ENCODE measurements at regions of chr6 and their contacts with region 1.

Region 1: DNA sequence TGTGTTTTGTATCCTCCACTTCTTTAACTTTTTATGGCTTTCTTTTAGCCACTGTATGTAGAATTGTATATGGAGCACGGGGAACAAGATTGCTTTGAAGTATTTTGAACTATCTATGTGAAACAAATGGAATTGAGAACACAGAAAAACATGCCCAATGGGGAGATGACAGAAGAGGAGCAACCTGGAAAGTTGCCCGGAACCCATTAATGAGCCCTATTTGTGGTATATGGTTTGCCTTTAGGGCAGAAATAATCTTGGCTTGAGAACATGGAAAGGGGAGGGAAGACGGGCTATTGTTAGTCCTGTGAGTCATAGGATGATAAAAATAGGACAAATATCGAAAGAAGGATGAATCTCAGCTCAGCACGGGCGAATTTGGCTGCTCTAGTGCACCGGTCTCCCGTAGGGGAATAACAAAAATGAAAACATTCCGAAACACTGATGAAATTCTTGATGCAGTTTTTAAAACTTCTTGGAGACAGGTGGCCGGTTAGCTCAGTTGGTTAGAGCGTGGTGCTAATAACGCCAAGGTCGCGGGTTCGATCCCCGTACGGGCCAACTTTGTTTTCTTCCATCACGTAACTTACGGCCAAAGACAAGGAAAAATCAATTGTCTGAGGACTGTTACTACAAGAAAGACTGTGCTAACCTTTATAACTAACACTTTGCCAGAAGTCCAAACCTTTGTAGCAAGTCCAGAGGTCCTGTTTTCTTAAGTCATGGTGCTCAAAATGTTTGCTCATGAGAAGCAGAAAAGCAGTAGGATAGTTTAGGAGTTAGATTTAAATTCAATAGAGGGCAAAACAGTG is 15.7 kb downstream of the HMGN4 start:
- DNase-seq: peak; percentile 89
- H3K4me3 Mint-ChIP-seq: no peak overlapping the region
- H3K27ac Mint-ChIP-seq: no peak overlapping the region
- H3K4me1 Mint-ChIP-seq: peaks cover 23% of the 10 kb centered on the region
- H3K27me3 Mint-ChIP-seq: no peaks in the 10 kb centered on the region

Region 2: DNA sequence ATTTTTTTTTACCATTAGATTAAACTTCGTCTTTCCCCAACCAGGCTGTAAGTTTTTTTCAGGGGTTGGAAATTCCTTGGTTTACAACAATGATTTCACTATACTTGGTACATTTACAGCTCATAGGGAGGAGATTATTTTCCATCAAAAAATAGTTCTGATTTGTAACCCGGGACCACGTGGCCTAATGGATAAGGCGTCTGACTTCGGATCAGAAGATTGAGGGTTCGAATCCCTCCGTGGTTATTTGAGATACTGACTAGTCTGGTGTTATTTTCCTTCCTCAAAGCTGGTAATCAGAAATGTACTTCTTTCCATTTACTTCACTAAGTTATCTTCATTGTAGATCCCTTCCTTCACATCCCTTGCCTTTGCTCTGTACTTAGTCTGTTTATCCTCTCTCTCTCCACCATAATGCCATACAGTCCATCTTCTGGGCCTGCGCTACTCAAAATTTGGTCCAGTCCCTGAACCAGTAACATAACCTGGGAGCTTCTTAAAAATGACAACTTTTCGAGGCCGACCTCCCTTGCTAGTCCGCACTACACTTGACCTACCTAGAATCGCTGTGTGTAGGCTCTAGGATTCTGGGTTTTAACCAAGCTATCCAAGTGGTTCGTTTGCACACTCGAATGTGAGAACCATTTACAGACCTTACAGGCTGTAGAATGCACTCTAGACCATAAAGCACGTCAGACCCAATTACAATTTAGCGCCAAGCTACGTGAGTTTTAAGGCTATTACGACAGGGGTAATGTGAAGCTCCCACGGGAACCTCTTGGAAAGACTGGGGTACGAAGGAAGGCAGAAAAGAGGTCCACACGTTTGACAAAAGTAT is 231.0 kb before region 1 on chr6:
- CTCF ChIA-PET with region 1: interaction called, 3 read pairs
- POLR2A ChIA-PET with region 1: no interaction called
- intact Hi-C with region 1: loop called (anchors 5 kb)
- DNase-seq: peak; percentile 64
- H3K4me3 Mint-ChIP-seq: peak overlapping the region; percentile 82
- H3K27ac Mint-ChIP-seq: peak overlapping the region; percentile 80
- H3K4me1 Mint-ChIP-seq: peaks cover 21% of the 10 kb centered on the region
- H3K27me3 Mint-ChIP-seq: peaks cover 25% of the 10 kb centered on the region

Region 3: GRCh38 chr6:26520853-26521599 is 32.8 kb before region 1 on chr6:
- CTCF ChIA-PET with region 1: no interaction called
- POLR2A ChIA-PET with region 1: no interaction called
- intact Hi-C with region 1: loop called (anchors 1 kb)
- DNase-seq: peak; percentile 89
- H3K4me3 Mint-ChIP-seq: peak overlapping the region; percentile 72
- H3K27ac Mint-ChIP-seq: peak overlapping the region; percentile 81
- H3K4me1 Mint-ChIP-seq: peaks cover 30% of the 10 kb centered on the region
- H3K27me3 Mint-ChIP-seq: peaks cover 1% of the 10 kb centered on the region

Region 4: GRCh38 chr6:26537846-26538571 is 15.8 kb before region 1 on chr6 and contains the start of gene HMGN4:
- CTCF ChIA-PET with region 1: interaction called, 16 read pairs
- POLR2A ChIA-PET with region 1: interaction called, 8 read pairs
- intact Hi-C with region 1: loop called (anchors 1 kb)
- DNase-seq: peak; percentile 88
- H3K4me3 Mint-ChIP-seq: peak within 1 kb of the TSS; percentile 84
- H3K27ac Mint-ChIP-seq: peak within 1 kb of the TSS; percentile 97
- H3K4me1 Mint-ChIP-seq: peaks cover 64% of the 10 kb centered on the region
- H3K27me3 Mint-ChIP-seq: peaks cover 2% of the 10 kb centered on the region
- total RNA-seq, gene HMGN4: 93.2 to 96.0 TPM

Region 5: DNA sequence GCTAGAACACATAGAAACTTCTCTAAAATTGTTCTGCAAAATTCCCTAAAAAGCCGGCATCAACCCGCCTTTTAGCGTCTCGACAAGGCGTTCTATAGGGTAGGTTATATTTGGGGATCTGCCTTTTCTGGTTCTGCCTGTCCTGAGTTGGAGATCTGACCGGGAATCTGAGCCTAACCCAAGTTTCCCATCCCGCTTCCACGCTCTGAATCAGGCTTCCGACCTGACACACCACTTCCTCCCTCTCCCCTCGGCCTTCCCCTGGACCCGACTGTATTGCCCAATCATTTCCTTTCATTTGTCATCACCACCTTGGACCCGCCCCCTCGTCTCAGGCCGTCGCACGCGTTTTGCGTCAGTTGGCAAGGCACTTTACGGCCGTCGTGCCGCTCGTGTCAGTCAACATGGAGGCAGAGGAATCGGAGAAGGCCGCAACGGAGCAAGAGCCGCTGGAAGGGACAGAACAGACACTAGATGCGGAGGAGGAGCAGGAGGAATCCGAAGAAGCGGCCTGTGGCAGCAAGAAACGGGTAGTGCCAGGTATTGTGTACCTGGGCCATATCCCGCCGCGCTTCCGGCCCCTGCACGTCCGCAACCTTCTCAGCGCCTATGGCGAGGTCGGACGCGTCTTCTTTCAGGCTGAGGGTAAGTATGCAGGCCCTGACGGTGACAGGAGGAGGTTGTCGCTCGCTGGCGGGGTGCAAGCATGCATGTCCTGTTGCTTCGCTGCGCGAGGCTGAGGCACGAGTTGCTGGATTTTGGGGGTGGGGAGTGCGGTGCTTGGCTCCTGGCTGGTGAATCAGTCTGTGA is 42.9 kb after region 1 on chr6 and contains the start of gene ABT1:
- CTCF ChIA-PET with region 1: interaction called, 21 read pairs
- POLR2A ChIA-PET with region 1: interaction called, 3 read pairs
- intact Hi-C with region 1: loop called (anchors 1 kb)
- DNase-seq: peak; percentile 98
- H3K4me3 Mint-ChIP-seq: no peak within 1 kb of the TSS
- H3K27ac Mint-ChIP-seq: no peak within 1 kb of the TSS
- H3K4me1 Mint-ChIP-seq: peaks cover 44% of the 10 kb centered on the region
- H3K27me3 Mint-ChIP-seq: peaks cover 26% of the 10 kb centered on the region
- total RNA-seq, gene ABT1: 22.6 to 22.7 TPM